A673 (cell line): ENCODE measurements at regions of chr4 and their contacts with region 1.

Region 1: GRCh38 chr4:156515295-156515694 is 456.3 kb downstream of the PDGFC start:
- DNase-seq: peak; percentile 62
- H3K4me3 ChIP-seq: no peak overlapping the region
- H3K27ac ChIP-seq: peak overlapping the region; percentile 92
- H3K4me1 ChIP-seq: peaks cover 78% of the 10 kb centered on the region
- H3K27me3 ChIP-seq: no peaks in the 10 kb centered on the region
- CTCF ChIP-seq: no peak

Region 2: GRCh38 chr4:156294577-156294976 is 220.7 kb before region 1 on chr4:
- CTCF ChIA-PET with region 1: no interaction called
- POLR2A ChIA-PET with region 1: no interaction called
- intact Hi-C with region 1: loop called (anchors 1 kb)
- DNase-seq: peak; percentile 93
- H3K4me3 ChIP-seq: no peak overlapping the region
- H3K27ac ChIP-seq: peak overlapping the region; percentile 74
- H3K4me1 ChIP-seq: peaks cover 40% of the 10 kb centered on the region
- H3K27me3 ChIP-seq: no peaks in the 10 kb centered on the region
- CTCF ChIP-seq: peak; percentile 74

Region 3: DNA sequence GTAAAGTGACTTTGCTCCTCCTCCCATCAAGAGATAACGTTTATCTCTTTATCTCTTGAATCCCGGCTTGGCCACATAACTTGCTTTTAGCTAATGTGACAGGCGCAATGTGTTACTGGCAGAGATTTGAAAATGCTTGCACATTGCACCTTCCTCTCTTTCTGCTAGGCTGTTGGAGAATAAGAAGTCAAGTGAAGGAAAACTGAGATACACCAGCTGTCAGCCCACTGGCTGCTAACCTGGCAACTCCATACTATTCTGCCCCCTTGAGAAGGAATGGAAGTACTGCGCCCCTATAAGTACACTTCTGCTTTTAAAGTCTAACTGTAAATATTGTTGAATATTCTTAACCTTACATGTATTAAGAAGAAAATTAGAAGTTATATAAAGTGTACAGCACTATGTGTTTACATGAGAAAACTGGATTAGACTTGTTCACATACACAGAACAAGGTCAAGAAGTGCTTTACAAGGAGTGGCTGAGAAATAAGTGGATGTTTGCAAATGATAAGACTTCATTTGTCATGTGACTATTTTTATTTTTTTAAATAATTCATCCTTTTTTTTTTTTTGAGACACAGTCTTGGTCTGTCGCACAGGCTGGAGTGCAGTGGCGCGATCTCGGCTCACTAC is 137.1 kb before region 1 on chr4:
- CTCF ChIA-PET with region 1: no interaction called
- POLR2A ChIA-PET with region 1: no interaction called
- intact Hi-C with region 1: no loop called
- DNase-seq: peak; percentile 81
- H3K4me3 ChIP-seq: no peak overlapping the region
- H3K27ac ChIP-seq: no peak overlapping the region
- H3K4me1 ChIP-seq: peaks cover 7% of the 10 kb centered on the region
- H3K27me3 ChIP-seq: no peaks in the 10 kb centered on the region
- CTCF ChIP-seq: peak; percentile 87

Region 4: DNA sequence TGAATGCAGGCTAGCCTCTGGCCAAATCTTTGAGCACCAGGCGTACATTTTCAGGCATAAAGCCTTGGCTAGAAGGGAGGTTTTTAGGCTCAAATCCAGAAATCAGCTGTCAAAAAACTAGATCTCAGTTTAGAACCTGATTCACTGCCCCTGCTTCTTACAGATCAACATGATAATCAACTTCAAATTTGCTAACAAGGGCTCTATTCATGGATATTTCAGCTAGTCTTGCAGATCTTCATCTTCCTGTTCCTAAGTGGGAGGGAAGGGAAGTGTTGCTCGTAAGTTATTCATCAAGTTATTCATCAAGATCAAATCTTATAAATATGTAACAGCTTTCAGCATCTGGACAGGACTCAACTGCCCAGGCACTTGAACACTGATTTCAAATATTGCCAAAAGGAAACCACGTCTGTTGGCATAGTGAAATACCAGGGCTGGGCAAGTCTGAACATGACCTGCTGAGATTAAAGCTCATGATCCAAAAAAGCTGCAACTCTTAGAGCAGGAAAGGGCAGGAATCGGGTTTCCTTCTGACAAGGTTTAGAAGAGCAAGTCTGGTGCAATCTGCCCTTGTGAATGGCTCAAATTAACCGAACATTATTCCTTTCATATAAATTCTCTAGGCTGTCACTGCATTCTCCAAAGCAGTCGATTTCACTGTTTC is 256.0 kb after region 1 on chr4:
- CTCF ChIA-PET with region 1: no interaction called
- POLR2A ChIA-PET with region 1: no interaction called
- intact Hi-C with region 1: loop called (anchors 2 kb)
- DNase-seq: peak; percentile 96
- H3K4me3 ChIP-seq: peak overlapping the region; percentile 18
- H3K27ac ChIP-seq: peak overlapping the region; percentile 78
- H3K4me1 ChIP-seq: peaks cover 71% of the 10 kb centered on the region
- H3K27me3 ChIP-seq: no peaks in the 10 kb centered on the region
- CTCF ChIP-seq: no peak

Region 5: DNA sequence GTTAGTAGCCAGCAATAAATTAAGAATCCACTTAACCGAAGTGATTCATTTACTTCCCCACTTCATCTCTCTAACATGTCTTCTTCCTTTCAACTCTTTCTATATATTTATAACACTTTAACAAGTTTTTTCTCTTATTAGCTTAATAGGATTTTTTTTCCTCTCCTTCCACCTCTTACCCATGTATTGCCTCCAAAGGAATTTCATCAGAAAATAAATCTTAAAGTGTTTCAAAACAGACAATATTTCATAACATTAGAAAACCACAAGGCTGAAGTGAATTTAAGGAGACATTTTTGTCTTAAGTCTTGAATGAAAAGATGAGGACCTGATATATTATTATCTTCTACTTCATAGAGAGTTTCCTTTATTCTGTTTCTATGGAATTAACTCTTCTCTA is 354.8 kb after region 1 on chr4:
- CTCF ChIA-PET with region 1: no interaction called
- POLR2A ChIA-PET with region 1: no interaction called
- intact Hi-C with region 1: no loop called
- DNase-seq: no peak
- H3K4me3 ChIP-seq: peak overlapping the region; percentile 9
- H3K27ac ChIP-seq: peak overlapping the region; percentile 69
- H3K4me1 ChIP-seq: peaks cover 46% of the 10 kb centered on the region
- H3K27me3 ChIP-seq: no peaks in the 10 kb centered on the region
- CTCF ChIP-seq: no peak

Region 6: GRCh38 chr4:157128395-157128794 is 613.1 kb after region 1 on chr4:
- CTCF ChIA-PET with region 1: no interaction called
- POLR2A ChIA-PET with region 1: no interaction called
- intact Hi-C with region 1: loop called (anchors 5 kb)
- DNase-seq: peak; percentile 69
- H3K4me3 ChIP-seq: no peak overlapping the region
- H3K27ac ChIP-seq: no peak overlapping the region
- H3K4me1 ChIP-seq: peaks cover 10% of the 10 kb centered on the region
- H3K27me3 ChIP-seq: no peaks in the 10 kb centered on the region
- CTCF ChIP-seq: peak; percentile 67